ENCODE measurements at regions of chr1 and their contacts with region 1.

Region 1: GRCh38 chr1:199243423-199244061 is 604.7 kb downstream of the PTPRC start:
- DNase-seq: peak; percentile 53 to 76
- ATAC-seq: no peak
- H3K4me3 ChIP-seq: no peak overlapping the region
- H3K27ac ChIP-seq: no peak overlapping the region
- H3K4me1 ChIP-seq: no peaks in the 10 kb centered on the region
- H3K27me3 ChIP-seq: peaks cover 0 to 3% of the 10 kb centered on the region in 2 donors

Region 2: DNA sequence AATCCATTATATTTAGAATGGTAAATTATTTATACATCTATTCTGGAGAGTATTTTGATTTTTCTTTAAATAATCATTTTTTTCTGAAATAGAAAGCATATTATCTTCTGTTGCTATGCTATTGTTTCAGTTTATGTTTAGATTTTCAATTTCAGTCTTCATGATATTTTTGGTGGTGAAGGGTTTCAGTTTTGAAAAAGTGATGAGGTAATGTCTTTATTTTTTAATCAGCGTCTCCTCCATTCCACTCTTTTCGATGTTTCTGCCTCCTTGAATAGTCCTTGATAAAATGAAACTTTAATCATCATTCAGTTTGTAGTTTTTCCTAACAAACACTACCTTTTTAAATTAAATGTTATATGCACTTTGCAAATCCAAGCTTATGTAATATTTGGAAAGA is 176.1 kb before region 1 on chr1:
- intact Hi-C with region 1: no loop called
- DNase-seq: no peak
- ATAC-seq: no peak
- H3K4me3 ChIP-seq: no peak overlapping the region
- H3K27ac ChIP-seq: no peak overlapping the region
- H3K4me1 ChIP-seq: no peaks in the 10 kb centered on the region
- H3K27me3 ChIP-seq: no peaks in the 10 kb centered on the region

Region 3: GRCh38 chr1:199202331-199202730 is 41.2 kb before region 1 on chr1:
- intact Hi-C with region 1: no loop called
- DNase-seq: no peak
- ATAC-seq: no peak
- H3K4me3 ChIP-seq: no peak overlapping the region
- H3K27ac ChIP-seq: no peak overlapping the region
- H3K4me1 ChIP-seq: no peaks in the 10 kb centered on the region
- H3K27me3 ChIP-seq: no peaks in the 10 kb centered on the region

Region 4: GRCh38 chr1:199322278-199322677 is 78.7 kb after region 1 on chr1:
- intact Hi-C with region 1: loop called in 1 of 2 experiments (anchors 5 kb)
- DNase-seq: no peak
- ATAC-seq: no peak
- H3K4me3 ChIP-seq: no peak overlapping the region
- H3K27ac ChIP-seq: no peak overlapping the region
- H3K4me1 ChIP-seq: no peaks in the 10 kb centered on the region
- H3K27me3 ChIP-seq: no peaks in the 10 kb centered on the region